Panc1 (cell line): ENCODE measurements at regions of chr11 and their contacts with region 1.

Region 1: GRCh38 chr11:93073508-93074280 is 104.2 kb downstream of the MTNR1B start:
- DNase-seq: no peak
- ATAC-seq: no peak
- H3K4me3 ChIP-seq: no peak overlapping the region
- H3K27ac ChIP-seq: no peak overlapping the region
- H3K4me1 ChIP-seq: no peaks in the 10 kb centered on the region
- H3K27me3 ChIP-seq: no peaks in the 10 kb centered on the region
- CTCF ChIP-seq: no peak

Region 2: GRCh38 chr11:93031386-93031785 is 42.3 kb before region 1 on chr11:
- CTCF ChIA-PET with region 1: no interaction called
- POLR2A ChIA-PET with region 1: interaction called, 18 read pairs
- in situ Hi-C with region 1: no loop called
- intact Hi-C with region 1: no loop called
- DNase-seq: no peak
- ATAC-seq: no peak
- H3K4me3 ChIP-seq: no peak overlapping the region
- H3K27ac ChIP-seq: no peak overlapping the region
- H3K4me1 ChIP-seq: no peaks in the 10 kb centered on the region
- H3K27me3 ChIP-seq: no peaks in the 10 kb centered on the region; the same call in 1 of the 2 replicates
- CTCF ChIP-seq: no peak